ENCODE measurements at regions of chr18 and their contacts with region 1.

Region 1: DNA sequence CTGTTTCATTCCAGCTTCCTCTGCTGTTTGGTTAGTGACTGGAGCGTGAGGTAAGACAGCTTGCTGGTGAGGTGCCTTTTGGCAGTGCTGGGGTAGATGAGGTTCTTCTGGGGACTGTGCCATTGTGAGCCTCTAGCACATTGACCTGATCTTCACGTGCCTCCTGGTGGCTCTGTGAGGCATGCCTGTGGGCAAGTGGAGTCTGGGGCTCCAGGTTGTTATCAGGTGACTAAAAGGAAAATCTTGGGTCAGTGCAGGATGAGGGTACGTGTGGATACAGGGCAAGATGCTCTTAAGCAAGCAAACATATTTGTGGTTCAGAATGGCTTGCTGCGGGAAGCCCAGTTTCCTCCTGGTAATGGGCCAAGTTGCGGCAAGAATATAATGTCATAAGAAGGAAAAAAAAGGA is 75.4 kb downstream of the FHOD3 start:
- DNase-seq: no peak
- ATAC-seq: peak in 1 of 2 donors; percentile 47

Region 2: GRCh38 chr18:36451454-36452251 is 78.7 kb after region 1 on chr18:
- intact Hi-C with region 1: loop called in 1 of 2 experiments (anchors 10 kb)
- DNase-seq: no peak
- ATAC-seq: peak in 1 of 2 donors; percentile 62

Region 3: GRCh38 chr18:36572135-36572856 is 199.4 kb after region 1 on chr18:
- intact Hi-C with region 1: loop called in 1 of 2 experiments (anchors 10 kb)
- DNase-seq: no peak
- ATAC-seq: peak; percentile 72 to 83

Measured in left cardiac atrium (tissue), 4 donors.